ENCODE measurements at regions of chr4 and their contacts with region 1.

Region 1: GRCh38 chr4:122758033-122758432 is 25.5 kb downstream of the BBS12 start:
- DNase-seq: peak; percentile 51
- H3K4me3 Mint-ChIP-seq: no peak overlapping the region
- H3K27ac Mint-ChIP-seq: peak overlapping the region; percentile 56
- H3K4me1 Mint-ChIP-seq: peaks cover 23% of the 10 kb centered on the region
- H3K27me3 Mint-ChIP-seq: no peaks in the 10 kb centered on the region
- CTCF ChIP-seq: peak; percentile 63

Region 2: GRCh38 chr4:122732329-122733026 is 25.6 kb before region 1 on chr4 and contains the start of gene BBS12:
- CTCF ChIA-PET with region 1: interaction called, 5 read pairs
- POLR2A ChIA-PET with region 1: interaction called, 12 read pairs
- intact Hi-C with region 1: no loop called
- DNase-seq: peak; percentile 99
- H3K4me3 Mint-ChIP-seq: peak within 1 kb of the TSS; percentile 84
- H3K27ac Mint-ChIP-seq: peak within 1 kb of the TSS; percentile 93
- H3K4me1 Mint-ChIP-seq: peaks cover 4% of the 10 kb centered on the region
- H3K27me3 Mint-ChIP-seq: no peaks in the 10 kb centered on the region
- CTCF ChIP-seq: peak; percentile 8
- total RNA-seq, gene BBS12: 4.7 and 8.3 TPM in 2 replicates

Region 3: DNA sequence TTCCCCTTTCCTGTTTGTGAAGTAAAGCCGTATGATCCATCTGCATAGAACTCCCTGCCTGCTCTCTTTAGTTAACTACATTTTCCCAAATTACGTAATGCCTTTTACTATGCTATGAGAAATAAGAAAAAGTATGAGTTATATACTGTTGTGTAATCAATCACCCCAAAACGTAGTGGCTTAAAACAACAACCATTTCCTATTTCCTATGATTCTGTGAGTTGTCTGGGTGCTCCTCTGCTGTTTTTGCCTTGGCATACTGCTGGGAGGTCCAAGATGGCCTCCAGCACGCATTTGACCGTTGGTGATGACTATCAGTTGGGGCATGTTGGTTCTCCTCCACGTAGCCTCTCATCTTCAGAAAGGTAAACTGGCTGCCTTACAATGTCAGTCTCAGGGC is 14.3 kb after region 1 on chr4:
- CTCF ChIA-PET with region 1: interaction called, 10 read pairs
- POLR2A ChIA-PET with region 1: interaction called, 32 read pairs
- intact Hi-C with region 1: no loop called
- DNase-seq: peak; percentile 76
- H3K4me3 Mint-ChIP-seq: no peak overlapping the region
- H3K27ac Mint-ChIP-seq: peak overlapping the region; percentile 61
- H3K4me1 Mint-ChIP-seq: peaks cover 29% of the 10 kb centered on the region
- H3K27me3 Mint-ChIP-seq: no peaks in the 10 kb centered on the region
- CTCF ChIP-seq: no peak

Region 4: GRCh38 chr4:122814426-122814825 is 56.4 kb after region 1 on chr4:
- CTCF ChIA-PET with region 1: no interaction called
- POLR2A ChIA-PET with region 1: no interaction called
- intact Hi-C with region 1: no loop called
- DNase-seq: no peak
- H3K4me3 Mint-ChIP-seq: no peak overlapping the region
- H3K27ac Mint-ChIP-seq: no peak overlapping the region
- H3K4me1 Mint-ChIP-seq: no peaks in the 10 kb centered on the region
- H3K27me3 Mint-ChIP-seq: no peaks in the 10 kb centered on the region
- CTCF ChIP-seq: no peak

Region 5: DNA sequence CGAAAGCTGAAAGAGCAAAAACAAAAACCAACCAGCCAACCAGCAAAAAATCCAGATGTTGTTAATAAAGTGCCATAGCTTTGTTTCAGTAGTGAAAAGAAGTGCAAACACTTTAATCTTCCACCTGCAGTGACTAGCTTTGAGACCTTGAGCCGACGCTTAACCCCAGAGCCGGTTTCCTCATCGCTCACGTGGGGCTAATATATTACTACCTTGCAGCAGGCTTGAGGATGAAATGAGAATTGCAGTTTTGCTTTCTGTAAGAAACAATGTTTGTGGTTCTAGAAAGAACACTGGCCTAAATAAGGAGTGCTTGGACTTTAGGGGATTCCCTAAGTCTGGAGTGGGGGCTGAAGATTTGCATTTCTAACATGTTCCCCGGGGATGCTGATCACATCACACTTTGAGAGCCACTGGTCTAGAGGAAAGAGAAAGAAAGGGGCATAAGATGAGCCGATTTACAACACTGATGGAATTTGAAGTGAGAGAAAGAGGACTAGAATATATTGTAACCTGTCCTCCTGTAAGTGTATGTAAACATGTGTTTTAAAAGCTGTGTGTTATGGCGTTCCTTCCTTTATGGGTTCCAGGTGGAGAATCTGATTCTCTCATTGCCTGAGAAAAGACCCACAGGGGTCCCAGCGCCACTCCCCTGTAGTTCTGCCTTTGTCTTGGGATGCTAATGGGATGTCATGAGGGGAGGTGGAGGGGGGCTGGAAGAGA is 70.0 kb after region 1 on chr4:
- CTCF ChIA-PET with region 1: interaction called, 25 read pairs
- POLR2A ChIA-PET with region 1: interaction called, 23 read pairs
- intact Hi-C with region 1: loop called (anchors 1 kb)
- DNase-seq: peak; percentile 75
- H3K4me3 Mint-ChIP-seq: peak overlapping the region; percentile 77
- H3K27ac Mint-ChIP-seq: peak overlapping the region; percentile 91
- H3K4me1 Mint-ChIP-seq: peaks cover 26% of the 10 kb centered on the region
- H3K27me3 Mint-ChIP-seq: no peaks in the 10 kb centered on the region
- CTCF ChIP-seq: no peak

Region 6: DNA sequence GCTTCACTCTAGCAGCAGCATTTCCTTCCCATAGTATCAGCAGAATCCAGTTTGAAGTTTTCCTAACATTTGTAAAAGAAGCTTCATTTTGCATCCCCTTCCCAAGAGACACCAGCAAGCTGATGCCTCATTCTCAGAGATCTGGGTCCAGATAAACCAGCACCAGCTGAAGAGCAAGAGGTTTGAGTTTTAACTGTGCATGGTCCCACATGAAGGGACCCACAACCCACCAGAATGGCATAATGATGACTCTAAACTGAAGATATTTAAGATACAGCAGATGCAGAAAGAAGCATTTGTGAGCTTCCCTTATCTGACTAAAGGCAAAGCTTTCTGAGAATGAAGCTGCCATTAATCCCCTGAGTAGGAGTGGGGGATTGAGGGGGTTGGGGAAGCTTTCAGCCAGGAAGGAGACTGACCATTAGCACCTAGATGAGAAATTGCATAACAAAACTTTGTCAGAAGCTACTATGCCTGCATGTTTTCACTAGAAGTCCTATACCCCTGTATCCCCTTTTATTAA is 145.8 kb after region 1 on chr4:
- CTCF ChIA-PET with region 1: interaction called, 12 read pairs
- POLR2A ChIA-PET with region 1: interaction called, 3 read pairs
- intact Hi-C with region 1: loop called (anchors 5 kb)
- DNase-seq: no peak
- H3K4me3 Mint-ChIP-seq: no peak overlapping the region
- H3K27ac Mint-ChIP-seq: no peak overlapping the region
- H3K4me1 Mint-ChIP-seq: peaks cover 9% of the 10 kb centered on the region
- H3K27me3 Mint-ChIP-seq: no peaks in the 10 kb centered on the region
- CTCF ChIP-seq: no peak

Region 7: GRCh38 chr4:122930862-122931261 is 172.8 kb after region 1 on chr4:
- CTCF ChIA-PET with region 1: interaction called, 17 read pairs
- POLR2A ChIA-PET with region 1: interaction called, 9 read pairs
- intact Hi-C with region 1: no loop called
- DNase-seq: peak; percentile 13
- H3K4me3 Mint-ChIP-seq: no peak overlapping the region
- H3K27ac Mint-ChIP-seq: no peak overlapping the region
- H3K4me1 Mint-ChIP-seq: no peaks in the 10 kb centered on the region
- H3K27me3 Mint-ChIP-seq: no peaks in the 10 kb centered on the region
- CTCF ChIP-seq: peak; percentile 51

Measured in MCF 10A (cell line).